Right cardiac atrium (tissue), 5 donors: ENCODE measurements at regions of chr4 and their contacts with region 1.

Region 1: DNA sequence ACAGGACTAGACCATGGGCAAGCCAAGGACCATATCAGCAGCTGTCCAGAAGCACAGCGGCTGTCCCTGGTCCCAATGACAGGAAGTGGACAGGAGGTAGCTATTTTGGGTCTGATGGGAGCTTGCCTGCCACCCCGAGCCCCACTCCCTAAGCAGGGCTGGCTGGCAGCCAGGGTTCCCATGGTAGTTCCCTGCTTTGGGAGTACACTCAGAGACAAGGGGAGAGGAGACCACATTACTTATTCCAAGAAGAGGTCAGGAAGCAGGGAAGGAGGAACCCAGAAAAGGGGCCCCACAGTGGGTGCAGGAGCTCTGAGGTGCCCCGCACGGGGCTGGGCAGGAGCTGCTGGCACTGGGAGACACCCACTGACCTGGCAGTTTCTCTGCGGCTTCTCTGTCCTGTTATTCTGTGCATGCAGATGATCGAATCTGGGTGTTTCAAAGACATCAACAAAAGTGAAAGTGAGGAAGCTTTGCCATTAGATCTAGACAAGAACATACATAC is 36.3 kb downstream of the HTT-AS start:
- DNase-seq: peak; percentile 75 to 90 (median 88)
- ATAC-seq: peak; percentile 33 to 36
- H3K4me3 ChIP-seq: no peak overlapping the region
- H3K27ac ChIP-seq: no peak overlapping the region
- H3K4me1 ChIP-seq: peaks cover 6% of the 10 kb centered on the region
- H3K27me3 ChIP-seq: no peaks in the 10 kb centered on the region

Region 2: GRCh38 chr4:2755837-2756694 is 281.9 kb before region 1 on chr4 and contains the start of gene TNIP2:
- intact Hi-C with region 1: loop called in 2 of 4 experiments (anchors 5 to 10 kb)
- DNase-seq: peak; percentile 92 to 96 (median 96)
- ATAC-seq: peak; percentile 89 to 91
- H3K4me3 ChIP-seq: peak within 1 kb of the TSS; percentile 82
- H3K27ac ChIP-seq: peak within 1 kb of the TSS; percentile 83
- H3K4me1 ChIP-seq: peaks cover 7% of the 10 kb centered on the region
- H3K27me3 ChIP-seq: no peaks in the 10 kb centered on the region
- total RNA-seq, gene TNIP2: 20.2 to 28.0 (median 24.6) TPM